Caco-2 (cell line): ENCODE measurements at regions of chr4 and their contacts with region 1.

Region 1: DNA sequence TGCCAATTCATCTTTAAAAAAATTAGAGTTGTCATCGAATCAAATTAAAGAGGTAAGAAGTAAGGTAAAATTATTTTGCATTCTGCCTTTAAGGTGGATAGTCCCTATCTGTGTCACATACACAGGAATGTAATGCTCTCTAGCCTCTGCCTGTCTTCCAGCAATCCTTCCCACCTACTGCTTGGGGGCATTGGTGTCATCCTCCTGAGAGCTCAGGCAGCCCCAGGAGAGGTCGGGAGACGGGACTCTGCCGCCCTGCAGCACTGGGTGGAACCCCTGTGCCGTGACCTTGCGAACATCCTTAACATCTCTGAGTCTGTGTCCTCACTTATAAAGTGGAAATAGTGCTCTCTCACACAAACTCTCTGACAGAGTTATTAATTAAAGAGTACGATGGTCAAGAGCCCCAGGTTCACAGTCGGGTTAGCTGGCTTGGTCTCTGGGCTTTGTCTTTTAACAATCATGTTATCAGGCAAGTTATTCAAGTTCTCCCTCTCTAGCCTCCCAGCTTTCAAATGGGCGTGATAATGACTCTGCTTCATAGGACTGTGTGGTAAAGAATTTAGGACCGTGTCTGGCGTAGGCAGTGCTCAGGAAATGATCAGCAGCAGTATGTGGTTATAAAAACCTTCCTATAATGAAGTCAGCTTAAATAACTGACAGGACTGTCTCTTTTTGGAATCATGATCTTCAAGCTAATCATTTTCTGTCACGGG is 10.2 kb downstream of the TLR3 start:
- DNase-seq: peak; percentile 19 to 49
- H3K4me3 ChIP-seq: no peak overlapping the region
- H3K4me3 Mint-ChIP-seq: peak overlapping the region; percentile 16
- H3K27ac Mint-ChIP-seq: no peak overlapping the region
- H3K4me1 ChIP-seq: peaks cover 6% of the 10 kb centered on the region; the same call in 1 of the 2 replicates
- H3K4me1 Mint-ChIP-seq: peaks cover 16% of the 10 kb centered on the region
- H3K27me3 ChIP-seq: no peaks in the 10 kb centered on the region
- H3K27me3 Mint-ChIP-seq: peaks cover 2% of the 10 kb centered on the region
- CTCF ChIP-seq: no peak

Region 2: DNA sequence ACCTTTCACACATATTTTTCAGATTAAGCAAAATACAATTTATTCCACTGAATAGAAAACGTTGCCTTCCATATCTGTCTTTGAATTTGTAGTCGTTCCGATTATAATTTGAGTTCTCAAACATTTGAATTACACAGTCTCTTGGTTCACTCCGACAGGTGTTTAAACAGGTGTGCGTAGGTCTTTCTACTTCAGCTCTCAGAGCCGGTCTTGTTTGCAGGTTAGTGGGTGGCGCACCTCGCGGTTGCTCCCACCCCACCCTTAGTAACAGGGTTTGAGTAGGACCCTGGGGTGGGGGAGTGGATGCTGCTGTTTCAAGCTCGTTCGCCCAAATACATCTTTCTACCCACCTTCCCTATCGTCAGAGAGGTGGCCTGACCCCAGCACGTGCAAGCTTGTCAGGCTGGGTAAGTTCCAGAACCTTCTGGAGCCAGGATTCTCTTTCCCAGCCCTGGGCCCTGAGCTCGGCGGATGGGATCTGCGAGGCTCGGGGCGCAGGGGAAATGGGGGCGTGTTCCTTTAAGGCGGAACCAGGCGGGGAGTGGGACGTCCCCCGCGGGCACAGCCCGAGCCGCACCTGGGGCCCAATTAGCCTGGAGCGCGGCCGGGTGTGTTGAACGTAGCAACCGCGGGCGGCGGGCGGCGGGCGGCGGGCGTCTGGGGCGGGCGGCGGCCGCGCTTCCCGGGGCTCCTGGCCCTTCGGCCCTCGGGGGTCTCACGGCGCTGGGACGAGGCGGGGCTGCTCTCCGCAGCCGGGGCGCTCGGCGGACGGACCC is 25.2 kb after region 1 on chr4 and contains the start of gene FAM149A:
- CTCF ChIA-PET with region 1: no interaction called
- POLR2A ChIA-PET with region 1: no interaction called
- intact Hi-C with region 1: loop called (anchors 2 kb)
- DNase-seq: peak; percentile 69 to 79
- H3K4me3 ChIP-seq: peak within 1 kb of the TSS; percentile 67
- H3K4me3 Mint-ChIP-seq: peak within 1 kb of the TSS; percentile 60
- H3K27ac Mint-ChIP-seq: peak within 1 kb of the TSS; percentile 82
- H3K4me1 ChIP-seq: 0 out of 2 replicates have a peak, but pooled peaks cover 4% of the 10 kb centered on the region
- H3K4me1 Mint-ChIP-seq: no peaks in the 10 kb centered on the region
- H3K27me3 ChIP-seq: no peaks in the 10 kb centered on the region
- H3K27me3 Mint-ChIP-seq: no peaks in the 10 kb centered on the region
- CTCF ChIP-seq: no peak
- total RNA-seq, gene FAM149A: 5.1 and 6.6 TPM in 2 replicates